ENCODE measurements at regions of chr1 and their contacts with region 1.

Region 1: DNA sequence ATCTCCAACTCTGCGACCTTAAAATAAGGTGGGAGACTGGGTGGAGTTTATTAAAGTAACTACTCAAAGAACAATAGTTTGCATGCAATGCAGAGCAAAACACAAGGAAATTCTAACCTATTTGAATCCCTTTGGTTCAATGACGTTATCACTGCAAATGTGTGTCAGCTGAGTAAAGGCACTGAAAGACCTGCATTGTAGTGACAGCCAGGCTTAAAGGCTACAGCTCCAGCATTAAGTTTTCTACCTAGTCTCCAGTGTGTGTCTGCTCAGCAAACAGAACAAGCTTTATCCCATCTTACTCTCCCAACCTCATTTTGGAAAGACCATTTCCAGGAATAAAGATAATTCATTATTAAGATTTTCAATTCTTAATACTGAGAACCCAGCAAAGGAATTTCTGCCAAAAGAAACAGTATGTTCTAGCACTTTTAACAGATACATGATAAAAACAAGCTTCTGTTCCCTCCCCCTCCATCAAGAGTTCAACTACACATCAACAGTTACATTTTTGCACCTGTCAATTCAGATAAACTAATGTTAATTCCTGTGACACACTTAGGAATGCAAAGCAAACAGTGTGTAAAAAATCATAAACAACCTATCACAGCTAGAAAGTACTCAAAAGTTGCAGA is 14.2 kb downstream of the PTP4A2 start:
- DNase-seq: peak in 1 of 9 donors; percentile 26
- ATAC-seq: no peak
- H3K4me3 ChIP-seq: no peak overlapping the region
- H3K4me3 Mint-ChIP-seq: peak overlapping the region in 9 of 10 donors; percentile 55 to 94 (median 68)
- H3K27ac ChIP-seq: peak overlapping the region; percentile 50
- H3K27ac Mint-ChIP-seq: peak overlapping the region; percentile 13 to 88 (median 66)
- H3K4me1 ChIP-seq: peaks cover 53 to 61% of the 10 kb centered on the region in 2 donors
- H3K4me1 Mint-ChIP-seq: peaks cover 65 to 87% (median 76%) of the 10 kb centered on the region in 7 donors
- H3K27me3 ChIP-seq: no peaks in the 10 kb centered on the region
- H3K27me3 Mint-ChIP-seq: no peaks in the 10 kb centered on the region

Region 2: GRCh38 chr1:31910933-31911332 is 13.1 kb before region 1 on chr1:
- CTCF ChIA-PET with region 1: interaction called, 4 read pairs
- POLR2A ChIA-PET with region 1: interaction called, 6 read pairs
- intact Hi-C with region 1: loop called in 1 of 2 experiments (anchors 2 kb)
- DNase-seq: no peak
- ATAC-seq: peak; percentile 41
- H3K4me3 ChIP-seq: no peak overlapping the region
- H3K4me3 Mint-ChIP-seq: peak overlapping the region in 5 of 10 donors; percentile 1 to 43 (median 20)
- H3K27ac ChIP-seq: no peak overlapping the region
- H3K27ac Mint-ChIP-seq: peak overlapping the region; percentile 19 to 78 (median 61)
- H3K4me1 ChIP-seq: peaks cover 27 to 40% of the 10 kb centered on the region in 2 donors
- H3K4me1 Mint-ChIP-seq: peaks cover 34 to 61% (median 58%) of the 10 kb centered on the region in 7 donors
- H3K27me3 ChIP-seq: no peaks in the 10 kb centered on the region
- H3K27me3 Mint-ChIP-seq: no peaks in the 10 kb centered on the region

Region 3: DNA sequence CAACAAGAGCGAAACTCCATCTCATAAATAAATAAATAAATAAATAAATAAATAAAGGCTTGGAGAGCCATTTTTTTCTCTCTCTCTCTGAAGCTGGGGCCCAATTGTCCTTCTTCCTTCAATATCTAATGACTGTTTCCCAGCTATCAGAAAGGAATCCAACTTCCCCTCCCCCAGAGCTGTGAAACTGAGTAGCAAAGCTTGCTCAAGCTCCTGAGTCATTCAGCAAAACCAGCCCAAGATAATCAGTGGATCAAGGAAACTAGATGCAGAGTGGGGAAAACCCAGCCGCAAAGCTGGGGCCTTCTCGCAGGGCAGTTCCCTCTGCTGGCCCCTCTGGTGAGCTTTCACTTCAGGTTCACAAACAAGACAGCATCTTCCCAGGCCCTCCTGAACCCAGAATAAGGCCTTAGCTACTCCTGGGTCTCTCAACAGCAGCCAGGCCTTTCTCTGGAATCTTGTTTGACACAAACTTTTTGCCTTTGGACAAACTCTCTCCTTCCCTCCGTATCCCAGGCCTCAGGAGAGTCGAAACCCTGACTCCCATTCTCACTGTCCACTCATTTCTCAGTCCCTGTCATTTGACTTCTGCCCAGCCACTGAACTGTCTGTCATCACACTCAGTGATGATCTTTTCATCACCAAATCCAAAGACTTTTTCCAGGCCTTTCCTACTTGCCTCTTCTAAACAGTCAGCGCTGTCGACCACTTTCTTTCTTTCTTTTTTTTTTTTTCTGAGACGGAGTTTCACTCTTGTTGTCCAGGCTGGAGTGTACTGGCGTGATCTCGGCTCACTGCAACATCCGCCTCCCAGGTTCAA is 32.1 kb after region 1 on chr1:
- CTCF ChIA-PET with region 1: interaction called, 3 read pairs
- POLR2A ChIA-PET with region 1: interaction called, 9 read pairs
- intact Hi-C with region 1: loop called (anchors 5 kb)
- DNase-seq: peak in 7 of 9 donors; percentile 31 to 79 (median 51)
- ATAC-seq: peak; percentile 93
- H3K4me3 ChIP-seq: no peak overlapping the region
- H3K4me3 Mint-ChIP-seq: peak overlapping the region; percentile 10 to 79 (median 59)
- H3K27ac ChIP-seq: peak overlapping the region; percentile 8
- H3K27ac Mint-ChIP-seq: peak overlapping the region; percentile 15 to 91 (median 83)
- H3K4me1 ChIP-seq: peaks cover 31 to 42% of the 10 kb centered on the region in 2 donors
- H3K4me1 Mint-ChIP-seq: peaks cover 45 to 76% (median 73%) of the 10 kb centered on the region in 7 donors
- H3K27me3 ChIP-seq: no peaks in the 10 kb centered on the region
- H3K27me3 Mint-ChIP-seq: no peaks in the 10 kb centered on the region